GM12878 (cell line): ENCODE measurements at regions of chr11 and their contacts with region 1.

Region 1: GRCh38 chr11:66363805-66364535 is 7.6 kb downstream of the SLC29A2 start:
- DNase-seq: no peak
- ATAC-seq: peak; percentile 88
- H3K4me3 ChIP-seq: no peak overlapping the region
- H3K27ac ChIP-seq: no peak overlapping the region
- H3K4me1 ChIP-seq: no peaks in the 10 kb centered on the region
- H3K27me3 ChIP-seq: no peaks in the 10 kb centered on the region
- CTCF ChIP-seq: peak; percentile 54 to 95 (median 89)
- EP300 ChIP-seq: no peak
- POLR2A ChIP-seq: no peak
- RAD21 ChIP-seq: 0 out of 2 replicates have a peak, but pooled peaks have one; percentile 14

Region 2: GRCh38 chr11:66344550-66345315 is 19.2 kb before region 1 on chr11 and contains the start of gene BRMS1:
- CTCF ChIA-PET with region 1: interaction called, 16 read pairs
- POLR2A ChIA-PET with region 1: no interaction called
- RAD21 ChIA-PET with region 1: no interaction called
- SMC1A ChIA-PET with region 1: no interaction called
- in situ Hi-C with region 1: no loop called
- intact Hi-C with region 1: no loop called
- DNase-seq: peak; percentile 79
- ATAC-seq: peak; percentile 87
- H3K4me3 ChIP-seq: peak within 1 kb of the TSS; percentile 87
- H3K27ac ChIP-seq: peak within 1 kb of the TSS; percentile 57
- H3K4me1 ChIP-seq: peaks cover 17% of the 10 kb centered on the region
- H3K27me3 ChIP-seq: no peaks in the 10 kb centered on the region
- CTCF ChIP-seq: peak in 2 of 3 experiments; percentile 13 to 16; a peak in 1 of 6 replicates
- EP300 ChIP-seq: peak in 1 of 2 experiments; percentile 35; a peak in 2 of 4 replicates
- POLR2A ChIP-seq: peak; percentile 98
- RAD21 ChIP-seq: no peak
- polyA plus RNA-seq, gene BRMS1: 2.1 to 8.6 TPM